ENCODE measurements at regions of chr21 and their contacts with region 1.

Region 1: DNA sequence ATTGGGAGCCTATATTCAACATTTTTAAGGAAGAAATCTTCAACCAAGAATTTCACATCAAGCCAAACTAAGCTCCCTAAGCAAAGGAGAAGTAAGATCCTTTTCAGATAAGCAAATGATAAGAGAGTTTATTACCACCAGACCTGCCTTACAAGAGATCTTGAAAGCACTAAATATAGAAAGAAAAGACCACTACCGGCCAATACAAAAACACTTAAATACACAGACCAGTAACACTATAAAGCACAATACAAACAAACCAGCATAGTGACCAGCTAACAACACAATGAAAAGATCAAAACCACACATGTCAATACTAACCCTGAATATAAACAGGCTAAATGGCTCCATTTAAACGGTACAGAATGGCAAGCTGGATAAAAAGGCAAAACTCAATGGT is 165.4 kb downstream of the MRPL39 start:
- DNase-seq: no peak
- H3K4me3 Mint-ChIP-seq: no peak overlapping the region
- H3K27ac Mint-ChIP-seq: no peak overlapping the region
- H3K4me1 Mint-ChIP-seq: peaks cover 2% of the 10 kb centered on the region
- H3K27me3 Mint-ChIP-seq: no peaks in the 10 kb centered on the region

Region 2: DNA sequence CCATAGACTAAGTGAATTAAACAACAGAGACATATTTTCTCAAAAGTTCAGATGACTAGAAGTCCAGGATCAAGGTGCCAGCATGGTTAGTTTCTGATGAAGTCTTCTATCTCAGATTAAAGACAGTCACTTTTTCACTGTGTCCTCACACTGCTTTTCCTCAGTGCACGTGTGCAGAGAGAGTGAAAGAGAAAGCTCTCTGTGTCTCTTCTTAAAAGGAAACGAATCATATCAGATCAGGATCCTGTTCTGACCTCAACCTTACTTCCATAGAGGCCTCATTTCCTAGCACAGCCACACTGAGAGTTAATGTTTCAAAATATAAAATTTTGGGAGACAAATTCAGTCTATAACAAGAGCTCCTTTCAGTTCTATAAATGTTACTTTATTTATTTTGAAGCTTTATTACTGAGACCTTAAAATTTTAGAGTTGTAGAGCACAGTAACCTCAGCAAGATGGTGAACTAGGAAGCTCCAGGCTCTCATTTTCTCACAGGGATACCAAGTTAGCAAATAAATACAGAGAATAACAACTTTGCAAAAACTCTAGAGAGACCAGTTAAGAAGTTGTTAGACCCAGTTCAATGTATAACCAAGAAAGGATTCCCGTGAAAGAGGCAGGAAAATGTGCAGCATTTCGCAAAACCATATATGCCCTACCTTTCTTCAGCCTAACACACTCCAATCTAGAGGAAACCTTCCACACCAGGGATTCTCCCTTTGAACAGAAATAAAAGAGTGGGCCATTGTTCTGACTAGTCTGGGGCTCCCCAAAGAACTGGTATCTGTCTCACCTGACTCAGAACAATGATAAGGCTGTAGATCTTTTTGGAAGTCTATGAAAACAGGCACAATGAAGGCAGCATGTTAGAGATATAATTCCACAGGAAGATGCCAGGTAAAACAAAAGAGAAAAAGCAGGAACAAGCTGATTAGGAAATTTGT is 206.7 kb before region 1 on chr21:
- CTCF ChIA-PET with region 1: no interaction called
- intact Hi-C with region 1: no loop called
- DNase-seq: no peak
- H3K4me3 Mint-ChIP-seq: no peak overlapping the region
- H3K27ac Mint-ChIP-seq: no peak overlapping the region
- H3K4me1 Mint-ChIP-seq: no peaks in the 10 kb centered on the region
- H3K27me3 Mint-ChIP-seq: peaks cover 3% of the 10 kb centered on the region

Region 3: GRCh38 chr21:25405984-25406383 is 35.9 kb before region 1 on chr21:
- CTCF ChIA-PET with region 1: no interaction called
- intact Hi-C with region 1: no loop called
- DNase-seq: no peak
- H3K4me3 Mint-ChIP-seq: no peak overlapping the region
- H3K27ac Mint-ChIP-seq: no peak overlapping the region
- H3K4me1 Mint-ChIP-seq: peaks cover 9% of the 10 kb centered on the region
- H3K27me3 Mint-ChIP-seq: peaks cover 9% of the 10 kb centered on the region

Region 4: DNA sequence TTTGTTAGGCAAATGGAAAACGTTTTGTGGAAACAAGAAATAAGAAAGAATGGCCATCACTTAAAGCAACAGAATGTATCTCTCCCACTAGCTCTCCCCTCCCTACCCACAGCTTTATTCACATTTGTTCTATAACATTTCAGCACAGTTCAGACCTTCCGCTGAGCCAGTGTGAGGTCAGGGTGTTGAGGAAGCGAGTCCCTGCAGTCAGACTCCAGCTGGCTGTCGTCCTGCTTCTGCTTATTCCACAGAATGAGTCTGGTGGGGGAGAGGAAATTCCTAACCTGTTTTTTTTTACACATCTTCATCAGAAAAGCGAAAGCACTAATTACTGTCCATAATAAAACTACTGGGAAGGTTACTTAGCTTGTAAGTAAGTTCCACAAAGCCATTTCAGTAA is 126.4 kb after region 1 on chr21:
- CTCF ChIA-PET with region 1: no interaction called
- intact Hi-C with region 1: loop called (anchors 1 kb)
- DNase-seq: no peak
- H3K4me3 Mint-ChIP-seq: peak overlapping the region; percentile 91
- H3K27ac Mint-ChIP-seq: peak overlapping the region; percentile 96
- H3K4me1 Mint-ChIP-seq: peaks cover 40% of the 10 kb centered on the region
- H3K27me3 Mint-ChIP-seq: no peaks in the 10 kb centered on the region

Region 5: DNA sequence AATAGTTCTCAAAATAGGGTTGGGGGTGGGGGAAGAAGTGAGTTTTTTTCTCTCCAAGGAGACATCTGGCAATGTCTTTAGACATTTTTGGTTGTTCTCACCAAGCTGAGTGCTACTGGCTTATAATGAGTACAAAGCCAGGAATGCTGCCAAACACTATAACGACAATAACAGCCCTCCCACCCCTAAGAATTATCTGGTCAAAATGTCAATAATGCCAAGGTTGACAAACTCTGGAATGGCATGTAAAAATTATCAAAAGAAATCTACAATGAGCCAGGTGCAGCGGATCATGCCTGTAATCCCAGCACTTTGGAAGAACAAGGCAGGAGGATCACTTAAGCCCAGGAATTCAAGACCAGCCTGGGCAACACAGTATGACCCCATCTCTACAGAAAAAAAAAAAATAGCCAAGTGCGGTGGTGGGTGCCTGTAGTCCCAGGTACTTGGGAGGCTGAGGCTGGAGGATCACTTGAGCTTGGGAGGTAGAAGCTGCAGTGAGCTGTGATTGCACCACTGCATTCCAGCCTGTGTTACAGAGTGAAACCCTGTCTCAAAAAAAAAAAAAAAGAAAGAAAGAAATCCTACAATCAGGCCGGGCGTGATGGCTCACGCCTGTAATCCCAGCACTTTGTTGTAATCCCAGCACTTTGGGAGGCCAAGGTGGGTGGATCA is 290.4 kb after region 1 on chr21:
- CTCF ChIA-PET with region 1: no interaction called
- intact Hi-C with region 1: no loop called
- DNase-seq: no peak
- H3K4me3 Mint-ChIP-seq: no peak overlapping the region
- H3K27ac Mint-ChIP-seq: no peak overlapping the region
- H3K4me1 Mint-ChIP-seq: peaks cover 32% of the 10 kb centered on the region
- H3K27me3 Mint-ChIP-seq: no peaks in the 10 kb centered on the region

Measured in activated naive CD4-positive, alpha-beta T cell treated with anti-CD3 and anti-CD28 coated beads for 36 hours (primary cell).